Activated CD4-positive, alpha-beta T cell treated with anti-CD3 and anti-CD28 coated beads, Interleukin-2, amount 10 ng/mL, durations not matched to agents 24 days and 14 days (primary cell): ENCODE measurements at regions of chr11 and their contacts with region 1.

Region 1: DNA sequence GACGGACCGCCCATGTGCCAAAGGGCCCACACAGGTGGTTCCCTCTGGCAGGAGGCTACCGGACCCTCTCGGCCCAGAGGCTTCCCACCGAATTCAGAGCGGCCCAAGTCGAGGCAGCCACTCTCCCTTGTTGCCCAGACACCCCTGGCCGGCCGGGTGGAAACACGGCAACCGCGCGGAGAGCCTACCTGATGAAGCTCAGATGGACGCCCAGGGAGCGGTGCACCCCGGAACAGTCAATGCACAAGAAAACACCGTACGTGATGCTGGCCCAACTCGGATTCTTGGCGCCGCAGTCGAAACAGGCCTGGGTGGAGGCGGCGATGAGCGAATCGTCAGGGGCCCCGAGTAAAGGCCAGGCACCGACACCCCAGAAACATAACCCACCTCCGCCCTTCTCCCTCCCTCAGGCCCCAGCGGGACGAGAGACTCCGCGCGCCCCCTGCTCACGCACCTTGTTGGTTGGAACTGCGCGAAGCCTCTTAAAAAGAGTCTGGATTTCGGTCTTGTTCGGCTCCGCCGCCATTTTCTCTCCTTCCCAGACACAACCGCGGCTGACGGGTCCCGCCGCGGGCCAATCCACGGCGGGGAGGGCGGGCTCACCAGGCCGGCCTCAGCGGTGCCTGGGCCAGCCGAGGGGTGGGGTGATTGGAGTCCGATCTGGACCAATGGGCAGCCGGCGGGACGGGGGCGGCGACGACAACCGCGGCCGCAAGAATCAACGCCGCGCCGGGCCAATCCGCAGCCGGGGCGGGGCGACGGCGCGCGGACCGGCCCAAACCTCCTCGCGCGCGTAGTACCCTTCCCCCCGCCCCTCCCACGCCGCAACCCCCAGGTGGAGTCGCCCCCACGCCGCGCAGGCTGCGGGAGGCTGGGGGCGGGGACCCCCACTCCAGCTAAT is at the start of gene ARFGAP2:
- DNase-seq: peak; percentile 99
- H3K4me3 Mint-ChIP-seq: peak within 1 kb of the TSS; percentile 92
- H3K27ac Mint-ChIP-seq: peak within 1 kb of the TSS; percentile 99
- H3K4me1 Mint-ChIP-seq: peaks cover 32% of the 10 kb centered on the region
- H3K27me3 Mint-ChIP-seq: no peaks in the 10 kb centered on the region
- total RNA-seq, gene ARFGAP2: 98.3 and 109 TPM in 2 replicates

Region 2: GRCh38 chr11:46845740-46846509 is 330.7 kb before region 1 on chr11 and contains the start of gene CKAP5:
- intact Hi-C with region 1: loop called (anchors 1 kb)
- DNase-seq: peak; percentile 97
- H3K4me3 Mint-ChIP-seq: peak within 1 kb of the TSS; percentile 88
- H3K27ac Mint-ChIP-seq: peak within 1 kb of the TSS; percentile 97
- H3K4me1 Mint-ChIP-seq: peaks cover 35% of the 10 kb centered on the region
- H3K27me3 Mint-ChIP-seq: no peaks in the 10 kb centered on the region
- total RNA-seq, gene CKAP5: 124 and 133 TPM in 2 replicates

Region 3: DNA sequence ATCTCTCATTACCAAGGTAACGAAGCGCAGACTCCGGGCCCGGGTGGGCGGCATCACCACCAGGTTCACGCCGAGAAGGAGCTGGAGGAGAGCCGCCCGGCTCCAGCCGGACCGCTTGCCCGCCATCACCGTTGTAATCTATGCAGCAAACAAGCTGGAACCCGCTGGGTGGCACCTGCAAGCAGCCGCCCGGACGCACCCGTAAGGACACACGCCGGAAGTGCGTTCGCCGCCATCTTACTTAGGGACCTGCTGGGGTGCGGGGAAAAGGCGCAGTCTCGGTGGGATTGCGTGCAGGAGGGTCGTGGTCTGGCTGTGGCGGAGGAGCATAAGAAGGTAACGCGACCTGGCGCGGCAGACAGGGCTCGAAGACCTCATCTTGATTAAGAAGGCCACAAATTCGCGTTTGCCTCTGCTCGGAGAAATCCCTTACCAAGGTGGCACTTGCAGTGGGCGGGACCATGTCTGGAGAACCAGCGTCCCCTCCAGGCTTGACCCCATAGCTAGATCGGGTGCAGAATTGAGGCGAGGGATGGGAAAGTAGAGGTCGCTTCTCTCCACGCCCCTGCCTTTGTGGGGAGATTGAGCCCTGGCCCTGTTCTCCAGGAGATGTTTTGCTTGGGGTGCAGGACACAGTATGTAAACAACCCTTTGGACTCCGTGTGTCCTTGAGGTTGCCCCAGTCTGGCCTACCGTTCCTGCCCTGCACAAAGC is 72.2 kb after region 1 on chr11 and contains the start of gene ACP2:
- intact Hi-C with region 1: loop called (anchors 1 kb)
- DNase-seq: peak; percentile 96
- H3K4me3 Mint-ChIP-seq: peak within 1 kb of the TSS; percentile 98
- H3K27ac Mint-ChIP-seq: peak within 1 kb of the TSS; percentile 98
- H3K4me1 Mint-ChIP-seq: peaks cover 14% of the 10 kb centered on the region
- H3K27me3 Mint-ChIP-seq: no peaks in the 10 kb centered on the region
- total RNA-seq, gene ACP2: 24.8 and 27.6 TPM in 2 replicates

Region 4: GRCh38 chr11:47269002-47269828 is 92.6 kb after region 1 on chr11:
- intact Hi-C with region 1: loop called (anchors 1 kb)
- DNase-seq: peak; percentile 94
- H3K4me3 Mint-ChIP-seq: peak overlapping the region; percentile 81
- H3K27ac Mint-ChIP-seq: peak overlapping the region; percentile 97
- H3K4me1 Mint-ChIP-seq: peaks cover 53% of the 10 kb centered on the region
- H3K27me3 Mint-ChIP-seq: no peaks in the 10 kb centered on the region

Region 5: DNA sequence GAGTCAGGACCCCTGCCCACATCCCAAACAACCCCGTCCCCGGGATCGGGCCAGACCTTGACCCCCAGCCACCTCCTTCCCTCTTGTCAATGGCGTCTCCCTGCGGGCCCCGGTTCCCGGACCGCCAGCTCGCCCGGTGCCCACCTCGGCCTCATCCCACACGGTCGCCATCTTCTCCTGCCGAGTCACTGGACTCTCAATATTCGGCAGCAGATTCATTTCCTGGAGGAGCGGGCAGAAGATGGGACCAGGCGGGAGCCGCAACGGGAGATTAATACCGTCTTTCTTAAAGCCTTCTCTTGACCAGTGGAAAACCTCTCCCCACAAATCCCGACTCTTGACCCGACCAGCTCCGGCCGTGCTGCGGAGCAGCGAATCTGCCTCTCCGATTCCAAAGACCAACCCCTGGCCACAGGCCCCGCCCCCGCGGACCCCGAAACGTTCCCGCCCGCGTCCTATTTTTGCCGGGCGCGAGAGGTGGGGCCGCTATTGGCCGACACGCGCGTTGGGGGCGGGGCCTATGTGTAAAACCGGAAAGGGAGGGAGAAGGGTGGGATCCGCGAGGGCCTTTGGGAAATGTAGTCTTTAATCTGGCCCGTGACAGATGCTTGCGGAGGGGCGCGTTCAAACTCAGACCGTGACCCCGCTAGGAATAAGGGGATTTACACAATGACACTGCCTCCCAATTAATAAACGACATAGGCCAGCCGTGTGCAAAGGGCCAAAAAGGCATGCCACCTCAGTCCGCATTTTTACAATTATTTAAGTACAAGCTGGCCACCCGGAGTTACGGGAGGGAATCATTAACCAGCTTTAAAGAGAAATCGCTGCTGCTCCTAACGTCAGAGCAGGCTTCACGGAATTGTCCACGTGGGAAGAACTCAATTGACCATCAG is 249.7 kb after region 1 on chr11 and contains the start of gene PSMC3:
- intact Hi-C with region 1: loop called (anchors 1 kb)
- DNase-seq: peak; percentile 100
- H3K4me3 Mint-ChIP-seq: peak within 1 kb of the TSS; percentile 100
- H3K27ac Mint-ChIP-seq: peak within 1 kb of the TSS; percentile 99
- H3K4me1 Mint-ChIP-seq: peaks cover 19% of the 10 kb centered on the region
- H3K27me3 Mint-ChIP-seq: no peaks in the 10 kb centered on the region
- total RNA-seq, gene PSMC3: 230 and 234 TPM in 2 replicates

Region 6: GRCh38 chr11:47642099-47642855 is 465.7 kb after region 1 on chr11 and contains the start of gene MTCH2:
- intact Hi-C with region 1: no loop called
- DNase-seq: peak; percentile 99
- H3K4me3 Mint-ChIP-seq: peak within 1 kb of the TSS; percentile 98
- H3K27ac Mint-ChIP-seq: peak within 1 kb of the TSS; percentile 98
- H3K4me1 Mint-ChIP-seq: peaks cover 15% of the 10 kb centered on the region
- H3K27me3 Mint-ChIP-seq: no peaks in the 10 kb centered on the region
- total RNA-seq, gene MTCH2: 128 and 136 TPM in 2 replicates